ENCODE measurements at regions of chr4 and their contacts with region 1.

Region 1: DNA sequence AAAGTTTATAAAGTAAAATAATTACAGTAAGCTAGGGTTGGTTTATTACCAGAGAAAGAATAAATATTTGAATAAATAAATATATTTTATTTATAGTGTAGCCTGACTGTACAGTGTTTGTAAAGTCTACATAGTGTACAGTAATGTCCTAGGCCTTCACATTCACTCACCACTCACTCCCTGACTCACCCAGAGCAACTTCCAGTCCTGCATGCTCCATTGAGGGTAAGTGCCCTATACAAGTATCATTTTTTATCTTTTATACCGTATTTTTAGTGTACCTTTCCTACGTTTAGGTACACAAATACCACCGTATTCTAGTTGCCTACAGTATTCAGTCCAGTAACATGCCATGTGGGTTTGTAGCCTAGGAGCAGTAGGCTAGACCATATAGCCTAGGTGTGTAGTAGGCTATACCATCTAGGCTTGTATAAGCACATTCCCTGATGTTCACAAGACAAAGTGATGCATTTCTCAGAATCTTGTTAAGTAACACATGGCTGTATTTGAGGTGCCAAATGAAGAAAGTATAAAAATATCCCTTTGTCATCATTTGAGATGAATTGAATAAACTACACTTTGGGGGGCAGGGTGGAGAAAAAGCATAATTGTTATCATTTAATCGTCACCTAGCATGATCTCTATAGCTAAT is 14.7 kb upstream of the KLHL8 start:
- DNase-seq: no peak
- ATAC-seq: no peak
- H3K4me3 Mint-ChIP-seq: peak overlapping the region; percentile 69
- H3K27ac Mint-ChIP-seq: no peak overlapping the region
- H3K4me1 Mint-ChIP-seq: peaks cover 2% of the 10 kb centered on the region
- H3K27me3 Mint-ChIP-seq: peaks cover 20% of the 10 kb centered on the region

Region 2: DNA sequence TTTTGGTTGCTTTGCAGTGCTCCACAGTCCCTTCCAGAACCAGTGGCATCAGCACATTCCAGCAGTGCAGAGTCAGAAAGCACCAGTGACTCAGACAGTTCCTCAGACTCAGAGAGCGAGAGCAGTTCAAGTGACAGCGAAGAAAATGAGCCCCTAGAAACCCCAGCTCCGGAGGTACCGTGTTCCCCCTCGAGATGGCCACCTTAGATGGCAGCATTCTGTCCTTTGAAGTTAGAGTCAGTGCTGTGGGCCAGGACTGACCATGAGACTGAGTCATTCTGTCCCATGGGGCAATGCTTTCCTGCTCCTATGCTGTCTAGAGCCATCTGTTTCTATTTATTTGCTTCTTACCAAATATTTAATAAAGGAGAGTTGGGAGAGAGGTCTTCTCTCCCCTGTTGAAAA is 127.0 kb before region 1 on chr4:
- CTCF ChIA-PET with region 1: no interaction called
- DNase-seq: no peak
- ATAC-seq: no peak
- H3K4me3 Mint-ChIP-seq: no peak overlapping the region
- H3K27ac Mint-ChIP-seq: no peak overlapping the region
- H3K4me1 Mint-ChIP-seq: peaks cover 27% of the 10 kb centered on the region
- H3K27me3 Mint-ChIP-seq: no peaks in the 10 kb centered on the region

Region 3: DNA sequence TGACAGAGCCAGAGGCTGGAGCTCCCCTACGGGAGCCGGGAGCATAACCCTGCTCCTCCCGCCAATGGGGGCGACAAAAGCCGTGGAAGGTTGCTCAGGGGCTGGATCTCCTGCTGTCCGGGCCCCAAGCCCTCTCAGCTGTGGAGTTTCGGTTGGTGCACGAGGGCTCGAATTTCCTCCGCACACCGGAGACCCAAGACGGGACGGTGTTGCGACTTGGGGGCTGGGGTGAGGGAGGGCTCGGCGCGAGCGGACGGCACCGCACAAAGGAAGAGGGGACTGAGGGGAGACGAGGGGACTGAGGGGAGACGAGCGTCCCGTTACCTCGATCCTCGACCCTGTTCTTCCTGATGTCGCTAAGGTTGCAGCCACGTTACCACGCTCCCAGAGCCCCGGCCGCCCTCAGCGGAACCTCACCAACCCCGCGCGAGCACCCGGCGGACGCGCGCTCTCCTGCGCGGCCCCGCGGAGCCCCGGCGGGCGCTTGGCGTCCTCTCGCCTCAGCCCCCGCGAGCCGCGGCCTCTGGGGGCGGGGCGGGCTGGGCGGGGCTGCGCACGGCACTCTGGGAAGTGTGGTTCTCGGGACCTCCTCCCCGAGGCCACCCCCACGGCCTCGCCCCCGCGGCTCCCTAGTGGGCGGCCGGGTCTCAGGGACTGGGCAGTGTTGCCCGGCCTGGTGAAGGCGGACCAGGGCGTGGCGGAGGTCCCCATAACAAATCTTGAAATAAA is 14.9 kb before region 1 on chr4 and contains the start of gene KLHL8:
- CTCF ChIA-PET with region 1: interaction called, 15 read pairs
- DNase-seq: peak; percentile 92
- ATAC-seq: peak; percentile 92
- H3K4me3 Mint-ChIP-seq: peak within 1 kb of the TSS; percentile 88
- H3K27ac Mint-ChIP-seq: peak within 1 kb of the TSS; percentile 93
- H3K4me1 Mint-ChIP-seq: peaks cover 14% of the 10 kb centered on the region
- H3K27me3 Mint-ChIP-seq: peaks cover 9% of the 10 kb centered on the region
- total RNA-seq, gene KLHL8: 11.0 to 12.0 TPM

Measured in activated CD8-positive, alpha-beta memory T cell treated with anti-CD3 and anti-CD28 coated beads, Interleukin-2, amount 10 ng/mL, durations not matched to agents 7 days and 5 days (primary cell).